ENCODE measurements at regions of chr1 and their contacts with region 1.

Region 1: GRCh38 chr1:27097484-27097917 is 57.4 kb downstream of the SLC9A1 start:
- DNase-seq: peak; percentile 81 to 91 (median 88)
- H3K4me3 ChIP-seq: no peak overlapping the region
- H3K27ac ChIP-seq: no peak overlapping the region
- H3K4me1 ChIP-seq: peaks cover 0 to 26% (median 24%) of the 10 kb centered on the region in 4 experiments
- H3K27me3 ChIP-seq: no peaks in the 10 kb centered on the region

Region 2: GRCh38 chr1:26970810-26971209 is 126.7 kb before region 1 on chr1:
- CTCF ChIA-PET with region 1: interaction called, 10 read pairs
- POLR2A ChIA-PET with region 1: no interaction called
- DNase-seq: no peak
- H3K4me3 ChIP-seq: no peak overlapping the region
- H3K27ac ChIP-seq: no peak overlapping the region
- H3K4me1 ChIP-seq: peaks cover 0 to 13% (median 13%) of the 10 kb centered on the region in 4 experiments
- H3K27me3 ChIP-seq: peaks cover 0 to 5% (median 0%) of the 10 kb centered on the region in 5 experiments

Region 3: DNA sequence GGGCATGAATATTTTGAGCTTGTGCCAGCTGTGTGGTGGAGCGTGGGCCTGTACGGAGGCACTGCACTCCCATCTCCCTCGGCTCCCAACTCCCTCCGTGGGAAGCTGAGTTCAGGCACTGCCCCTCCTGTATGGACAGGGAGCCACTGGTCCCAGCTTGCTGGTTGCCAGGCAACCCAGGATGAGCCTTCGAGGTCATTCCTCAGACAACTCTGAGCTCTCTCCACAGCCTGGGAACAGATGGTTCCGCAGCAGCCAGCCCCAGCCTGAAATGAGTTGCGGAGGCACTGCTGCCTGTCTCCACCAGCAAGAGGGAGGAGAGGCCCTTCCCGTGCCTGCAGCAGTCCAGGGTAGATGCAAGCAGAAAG is 26.5 kb before region 1 on chr1:
- CTCF ChIA-PET with region 1: interaction called, 10 read pairs
- POLR2A ChIA-PET with region 1: no interaction called
- DNase-seq: no peak
- H3K4me3 ChIP-seq: no peak overlapping the region
- H3K27ac ChIP-seq: no peak overlapping the region
- H3K4me1 ChIP-seq: peaks cover 0 to 8% (median 5%) of the 10 kb centered on the region in 4 experiments
- H3K27me3 ChIP-seq: peaks cover 0 to 2% (median 0%) of the 10 kb centered on the region in 5 experiments

Region 4: DNA sequence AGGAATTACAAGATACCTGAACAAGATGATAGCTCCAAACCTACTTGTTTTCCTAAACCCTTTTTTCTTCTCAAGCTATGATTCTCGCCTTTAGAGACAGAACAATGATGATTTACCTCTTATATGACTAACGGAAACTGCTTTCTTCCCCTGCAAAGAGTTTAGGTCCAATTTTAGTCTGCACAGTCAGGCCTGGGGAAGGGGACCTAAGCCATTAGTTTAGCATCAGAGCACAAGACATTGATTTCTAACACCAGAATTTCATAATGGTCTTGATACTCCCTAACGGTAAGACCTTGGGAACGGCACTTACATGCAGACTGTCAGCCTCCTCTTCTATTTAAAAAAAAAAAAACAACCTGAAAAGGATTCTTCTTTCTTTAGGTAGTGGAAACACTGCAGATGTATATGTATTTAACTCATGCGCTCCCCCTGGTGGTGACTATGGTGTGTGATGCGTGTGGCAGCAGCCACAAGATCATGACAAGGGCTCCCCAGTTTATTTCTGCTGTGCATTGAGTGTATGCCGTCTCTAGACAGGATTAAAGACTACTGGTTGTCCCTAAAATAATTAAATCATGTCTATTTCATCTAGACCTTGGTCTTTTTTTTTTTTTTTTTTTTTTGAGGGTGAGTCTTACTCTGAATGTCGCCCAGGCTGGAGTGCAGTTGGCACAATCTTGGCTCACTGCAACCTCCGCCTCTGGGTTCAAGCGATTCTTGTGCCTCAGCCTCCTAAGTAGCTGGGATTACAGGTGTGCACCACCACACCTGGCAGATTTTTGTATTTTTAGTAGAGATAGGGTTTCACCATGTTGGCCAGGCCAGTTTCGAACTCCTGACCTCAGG is 187.1 kb after region 1 on chr1:
- CTCF ChIA-PET with region 1: interaction called, 167 read pairs
- POLR2A ChIA-PET with region 1: no interaction called
- DNase-seq: peak; percentile 81 to 92 (median 87)
- H3K4me3 ChIP-seq: no peak overlapping the region
- H3K27ac ChIP-seq: no peak overlapping the region
- H3K4me1 ChIP-seq: no peaks in the 10 kb centered on the region
- H3K27me3 ChIP-seq: no peaks in the 10 kb centered on the region

Measured in common myeloid progenitor, CD34-positive (primary cell).